MCF 10A (cell line): ENCODE measurements at regions of chr10 and their contacts with region 1.

Region 1: DNA sequence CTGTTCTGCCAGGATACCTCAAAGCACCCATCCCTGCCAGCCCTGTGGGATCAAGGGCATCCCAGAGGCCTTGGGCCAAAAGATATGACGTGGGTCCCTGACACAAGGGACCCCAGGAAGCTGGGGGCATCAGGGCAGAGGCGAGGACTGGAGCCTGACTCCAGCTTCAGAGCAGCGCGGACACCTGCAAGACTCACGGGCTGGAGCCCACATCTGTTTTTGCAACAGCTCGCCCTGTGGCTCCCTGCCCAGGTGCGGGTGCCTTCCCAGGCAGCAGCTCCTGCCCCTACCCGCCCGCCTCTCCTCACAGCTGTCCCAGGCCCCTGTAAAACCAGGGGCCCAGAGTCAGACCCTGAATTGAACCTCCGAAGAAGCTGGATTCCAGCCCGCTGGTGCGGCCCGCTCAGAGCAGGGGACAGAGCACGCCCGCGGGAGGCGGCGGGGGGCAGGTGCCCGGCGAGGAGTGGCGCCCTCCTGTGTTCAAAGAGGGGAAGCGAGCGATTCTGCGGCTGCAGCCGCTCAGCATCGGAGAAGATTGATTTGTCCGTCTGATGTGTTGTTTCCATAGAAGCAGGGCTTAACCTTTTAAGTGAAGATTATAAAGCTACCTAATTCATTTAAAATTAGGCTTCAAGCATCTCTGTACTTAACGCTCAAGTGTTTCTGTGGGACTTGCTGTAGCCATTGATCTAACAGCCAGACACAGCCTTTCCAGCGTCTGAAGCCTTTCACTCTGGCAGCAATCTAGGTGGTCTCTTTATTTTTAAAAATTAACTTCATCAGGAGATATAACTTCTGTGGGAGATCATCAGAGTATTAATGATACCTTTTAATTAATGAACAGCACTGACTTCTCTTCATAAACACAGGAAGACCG is 88.4 kb downstream of the BEND7 start:
- DNase-seq: peak; percentile 53
- H3K4me3 Mint-ChIP-seq: peak overlapping the region; percentile 59
- H3K27ac Mint-ChIP-seq: no peak overlapping the region
- H3K4me1 Mint-ChIP-seq: peaks cover 6% of the 10 kb centered on the region
- H3K27me3 Mint-ChIP-seq: peaks cover 18% of the 10 kb centered on the region
- CTCF ChIP-seq: peak; percentile 87

Region 2: DNA sequence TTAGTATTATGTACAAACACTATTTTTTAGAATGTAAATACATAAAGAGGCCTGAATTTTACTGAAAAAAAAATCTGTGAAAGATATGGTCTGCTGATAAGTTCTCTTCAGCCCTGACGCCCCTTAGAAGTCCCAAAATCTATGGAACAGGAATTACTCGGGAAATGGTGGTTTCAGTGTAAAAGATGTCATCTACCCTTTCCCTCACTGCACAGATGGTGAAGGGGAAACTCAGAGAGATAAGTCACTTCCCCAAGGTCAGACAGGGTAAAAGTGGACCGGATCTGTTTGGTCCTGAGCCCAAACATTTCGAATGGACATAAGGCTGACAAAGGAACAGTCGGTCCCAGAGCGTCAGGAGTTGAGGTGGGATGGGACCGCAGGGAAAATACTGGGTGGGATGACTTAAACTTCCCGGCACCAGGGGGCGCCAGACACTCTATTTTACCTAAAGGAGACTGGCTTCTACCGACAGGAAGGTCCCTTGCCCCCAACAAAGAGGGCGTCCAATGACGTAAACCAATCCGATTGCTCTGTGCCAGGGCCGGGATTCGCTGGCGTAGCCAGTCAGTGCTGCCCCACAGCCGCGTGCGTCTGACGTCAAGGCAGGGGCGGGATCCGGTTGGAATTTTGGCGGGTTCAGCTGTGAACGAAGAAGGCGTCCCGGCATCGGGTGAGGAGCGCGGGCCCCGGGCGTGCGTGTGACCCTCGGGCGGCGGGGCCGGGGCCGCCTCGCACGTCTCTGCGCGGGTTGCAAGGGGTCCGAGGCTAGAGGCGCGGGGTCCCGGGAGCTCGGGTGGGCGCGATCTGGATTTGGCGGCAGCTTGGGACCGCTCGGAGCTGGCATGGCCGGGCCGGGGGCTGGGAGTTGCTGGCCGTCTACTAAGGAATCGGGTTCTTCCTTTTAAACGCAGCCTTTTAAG is 279.2 kb before region 1 on chr10 and contains the start of gene MCM10:
- CTCF ChIA-PET with region 1: no interaction called
- POLR2A ChIA-PET with region 1: no interaction called
- intact Hi-C with region 1: loop called (anchors 5 kb)
- DNase-seq: peak; percentile 99
- H3K4me3 Mint-ChIP-seq: peak within 1 kb of the TSS; percentile 85
- H3K27ac Mint-ChIP-seq: peak within 1 kb of the TSS; percentile 81
- H3K4me1 Mint-ChIP-seq: peaks cover 19% of the 10 kb centered on the region
- H3K27me3 Mint-ChIP-seq: no peaks in the 10 kb centered on the region
- CTCF ChIP-seq: peak; percentile 79
- total RNA-seq, gene MCM10: 3.5 and 6.0 TPM in 2 replicates

Region 3: DNA sequence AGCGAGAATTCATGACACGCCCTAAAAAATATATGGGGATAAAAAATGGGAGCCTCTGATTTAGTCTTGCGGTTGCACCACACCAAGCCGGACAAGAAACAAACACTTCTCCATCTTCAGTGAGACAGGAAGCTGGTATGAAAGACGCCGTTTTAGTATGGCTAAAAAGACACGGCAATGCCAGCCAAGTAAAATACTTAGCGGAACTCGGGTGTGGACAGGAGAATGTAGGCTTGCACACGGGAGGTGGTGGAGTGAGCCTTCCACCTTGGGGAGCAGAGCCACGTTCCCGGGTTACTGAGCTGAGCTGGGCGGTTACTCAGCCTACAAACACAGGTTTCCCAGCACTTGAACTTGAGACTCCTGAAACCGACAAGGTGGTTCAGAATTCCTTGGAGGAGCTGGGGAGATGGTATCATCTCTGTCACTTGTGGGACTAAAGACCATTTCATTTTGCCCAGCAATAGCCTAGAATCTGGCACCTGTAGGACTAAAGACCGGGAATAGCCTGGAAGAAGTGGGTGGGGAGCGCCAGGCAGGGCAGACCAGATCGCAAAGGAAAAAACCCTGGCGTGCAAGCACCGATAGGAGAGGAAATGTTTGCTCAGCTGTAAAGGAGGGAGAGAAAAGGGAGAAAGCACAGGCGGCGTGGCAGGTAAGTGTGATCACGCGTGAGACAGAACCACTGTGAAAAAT is 57.6 kb before region 1 on chr10:
- CTCF ChIA-PET with region 1: interaction called, 14 read pairs
- POLR2A ChIA-PET with region 1: interaction called, 5 read pairs
- intact Hi-C with region 1: no loop called
- DNase-seq: peak; percentile 33
- H3K4me3 Mint-ChIP-seq: peak overlapping the region; percentile 79
- H3K27ac Mint-ChIP-seq: peak overlapping the region; percentile 78
- H3K4me1 Mint-ChIP-seq: peaks cover 17% of the 10 kb centered on the region
- H3K27me3 Mint-ChIP-seq: no peaks in the 10 kb centered on the region
- CTCF ChIP-seq: no peak

Region 4: GRCh38 chr10:13388478-13389230 is 51.8 kb before region 1 on chr10:
- CTCF ChIA-PET with region 1: interaction called, 14 read pairs
- POLR2A ChIA-PET with region 1: interaction called, 5 read pairs
- intact Hi-C with region 1: no loop called
- DNase-seq: no peak
- H3K4me3 Mint-ChIP-seq: no peak overlapping the region
- H3K27ac Mint-ChIP-seq: no peak overlapping the region
- H3K4me1 Mint-ChIP-seq: peaks cover 8% of the 10 kb centered on the region
- H3K27me3 Mint-ChIP-seq: no peaks in the 10 kb centered on the region
- CTCF ChIP-seq: no peak

Region 5: DNA sequence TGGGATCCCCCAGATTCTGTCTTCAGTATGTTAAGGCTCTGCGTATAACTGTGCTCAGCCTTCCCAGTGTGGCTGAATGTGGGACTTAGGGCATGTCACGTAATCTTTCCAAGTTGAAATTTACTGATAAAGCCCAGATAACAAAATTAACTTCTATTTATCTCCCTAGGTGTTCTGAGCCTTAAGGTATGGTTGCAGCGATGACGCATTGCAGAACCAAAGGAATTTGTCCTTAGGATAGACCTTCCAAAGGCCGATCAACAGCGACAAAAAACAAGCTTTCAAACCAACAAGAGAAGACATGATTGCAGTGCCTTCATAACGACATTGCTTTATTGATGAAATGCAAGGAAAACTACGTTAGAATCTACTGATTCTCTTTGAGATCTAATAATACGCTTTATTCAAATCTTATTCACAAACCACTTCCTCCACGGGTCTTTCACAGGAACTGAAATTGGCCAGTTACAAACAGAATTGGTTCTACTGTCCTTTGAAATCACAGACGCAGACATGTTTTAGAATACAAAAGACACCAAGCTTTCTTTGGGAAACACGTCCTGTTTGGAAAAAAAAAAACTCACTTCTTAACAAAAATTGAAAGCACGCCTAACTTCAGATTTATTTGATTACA is 17.7 kb before region 1 on chr10:
- CTCF ChIA-PET with region 1: interaction called, 15 read pairs
- POLR2A ChIA-PET with region 1: no interaction called
- intact Hi-C with region 1: no loop called
- DNase-seq: no peak
- H3K4me3 Mint-ChIP-seq: no peak overlapping the region
- H3K27ac Mint-ChIP-seq: no peak overlapping the region
- H3K4me1 Mint-ChIP-seq: no peaks in the 10 kb centered on the region
- H3K27me3 Mint-ChIP-seq: peaks cover 19% of the 10 kb centered on the region
- CTCF ChIP-seq: no peak